Dorsolateral prefrontal cortex (tissue), 120 donors: ENCODE measurements at regions of chr21 and their contacts with region 1.

Region 1: GRCh38 chr21:33199516-33200217 is 30.1 kb upstream of the IFNAR2 start:
- DNase-seq: peak in 7 of 10 donors; percentile 58 to 93 (median 75)
- H3K4me3 ChIP-seq: peak overlapping the region in 10 of 59 donors; percentile 5 to 42 (median 17)
- H3K27ac ChIP-seq: peak overlapping the region in 56 of 59 donors; percentile 2 to 91 (median 75)
- H3K27me3 ChIP-seq: no peaks in the 10 kb centered on the region
- CTCF ChIP-seq: peak; percentile 62 to 96 (median 86)

Region 2: DNA sequence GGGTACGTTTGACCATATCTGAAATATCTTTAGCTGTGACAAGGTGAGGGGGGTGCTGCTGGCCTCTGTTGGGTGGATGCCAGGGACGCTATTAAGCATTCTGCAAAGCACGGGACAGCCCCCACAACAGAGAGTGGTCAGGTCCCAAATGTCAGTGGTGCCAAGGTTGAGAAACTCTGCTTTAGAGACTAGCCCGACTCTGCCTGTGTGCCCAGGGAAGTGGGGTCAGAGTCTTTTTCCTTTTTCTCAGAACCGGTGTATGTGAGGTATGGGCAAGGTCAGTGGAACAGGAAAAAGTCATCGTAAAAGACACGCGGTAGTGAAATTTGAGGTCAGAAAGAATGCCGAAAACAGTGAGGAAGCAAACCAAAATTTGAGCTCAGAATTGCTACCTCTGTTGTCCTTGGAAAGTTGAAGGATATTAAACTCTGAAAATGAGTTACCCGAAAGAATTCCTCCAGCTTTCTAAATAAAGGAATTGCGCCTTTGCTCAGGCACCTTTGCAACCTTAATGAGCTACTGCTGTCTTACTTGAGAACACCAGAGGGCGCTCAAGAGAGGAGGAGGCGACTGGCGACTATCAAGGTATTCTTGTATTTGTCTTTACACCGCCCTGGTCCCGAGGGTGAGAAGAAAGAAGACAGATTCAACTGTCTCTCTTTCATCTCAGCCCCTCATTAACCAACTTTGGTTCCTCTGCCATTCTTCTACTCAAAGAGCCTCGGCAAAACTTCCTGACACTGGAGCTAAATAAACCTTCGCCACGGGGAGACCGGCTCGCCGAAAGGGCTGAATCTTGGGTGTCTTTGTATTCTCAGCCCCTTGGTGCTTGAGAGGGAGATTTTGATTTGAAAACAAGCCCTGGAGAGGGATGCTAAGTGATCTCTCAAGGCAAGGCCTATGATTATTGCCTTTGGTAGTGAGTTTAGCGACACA is 259.3 kb before region 1 on chr21:
- intact Hi-C with region 1: loop called in 1 of 2 experiments (anchors 5 kb)
- DNase-seq: peak in 4 of 10 donors; percentile 19 to 59 (median 34)
- H3K4me3 ChIP-seq: peak overlapping the region in 14 of 59 donors; percentile 3 to 45 (median 29)
- H3K27ac ChIP-seq: peak overlapping the region in 11 of 59 donors; percentile 8 to 64 (median 45)
- H3K27me3 ChIP-seq: peaks cover 0 to 13% (median 0%) of the 10 kb centered on the region in 45 donors
- CTCF ChIP-seq: peak; percentile 48 to 95 (median 82)

Region 3: GRCh38 chr21:33025489-33026442 is 173.9 kb before region 1 on chr21 and contains the start of gene OLIG2:
- intact Hi-C with region 1: loop called (anchors 10 kb)
- DNase-seq: peak; percentile 46 to 96 (median 95)
- H3K4me3 ChIP-seq: peak within 1 kb of the TSS; percentile 35 to 82 (median 61)
- H3K27ac ChIP-seq: peak within 1 kb of the TSS; percentile 40 to 93 (median 86)
- H3K27me3 ChIP-seq: peaks cover 0 to 100% (median 92%) of the 10 kb centered on the region in 45 donors
- CTCF ChIP-seq: peak in 1 of 56 donors; percentile 17
- total RNA-seq, gene OLIG2: 13.9 to 165 (median 45.4) TPM

Region 4: DNA sequence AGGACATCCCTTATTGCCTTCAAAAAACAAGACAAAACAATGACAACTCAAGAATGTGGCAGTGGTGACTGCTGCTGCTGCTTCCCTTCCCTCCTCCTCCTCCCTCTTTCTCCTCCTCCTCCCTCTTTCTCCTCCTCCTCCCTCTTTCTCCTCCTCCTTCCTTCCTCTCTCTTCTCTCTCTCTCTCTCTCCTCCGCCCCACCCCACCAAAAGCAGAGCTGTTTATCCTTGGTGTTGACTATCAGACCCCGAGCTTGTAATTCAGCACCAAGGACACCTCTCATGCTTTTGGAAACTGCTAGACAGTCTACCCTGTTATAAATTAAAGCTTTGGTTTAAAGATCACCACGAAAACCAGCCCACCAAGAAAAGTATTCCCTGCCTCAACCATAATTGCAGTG is 42.4 kb before region 1 on chr21:
- intact Hi-C with region 1: no loop called
- DNase-seq: no peak
- H3K4me3 ChIP-seq: no peak overlapping the region
- H3K27ac ChIP-seq: no peak overlapping the region
- H3K27me3 ChIP-seq: peaks cover 0 to 12% (median 0%) of the 10 kb centered on the region in 45 donors
- CTCF ChIP-seq: no peak

Region 5: DNA sequence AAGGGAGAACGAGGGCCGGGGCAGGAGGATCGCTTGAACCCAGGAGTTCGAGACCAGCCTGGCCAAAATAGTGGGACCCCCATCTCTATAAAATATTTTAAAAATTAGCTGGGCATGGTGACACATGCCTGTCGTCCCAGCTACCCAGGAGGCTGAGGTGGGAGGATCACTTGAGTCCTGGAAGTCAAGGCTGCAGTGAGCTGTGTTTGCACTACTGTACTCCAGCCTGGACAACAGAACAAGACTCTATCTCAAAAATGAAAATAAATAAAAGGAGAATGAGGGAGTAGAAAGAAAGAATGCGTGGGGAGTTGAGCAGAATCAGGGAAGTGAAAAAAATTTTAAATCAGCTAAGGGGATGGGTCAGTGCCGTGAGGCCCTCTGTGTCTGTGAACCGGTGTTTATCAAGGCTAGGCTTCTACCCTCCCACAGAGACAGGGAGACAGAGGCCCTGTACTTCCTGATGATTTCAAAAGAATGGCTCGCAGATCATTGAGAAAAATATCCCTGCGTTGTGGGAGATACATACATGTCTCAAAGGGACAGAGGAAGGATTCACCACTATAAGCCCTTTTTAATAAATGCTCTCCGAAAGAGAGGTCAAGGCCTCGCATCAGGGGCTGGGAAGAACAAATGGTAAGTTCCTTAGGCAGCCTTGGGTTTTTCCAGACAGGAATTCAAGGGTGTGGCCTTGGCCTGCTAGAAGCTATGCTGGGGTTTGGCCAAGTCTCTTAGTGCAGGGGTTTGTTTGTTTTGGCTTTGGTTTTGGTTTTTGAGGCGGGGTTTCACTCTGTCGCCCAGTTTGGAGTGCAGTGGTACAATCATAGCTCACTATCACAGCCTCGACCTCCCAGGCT is 87.2 kb after region 1 on chr21:
- intact Hi-C with region 1: no loop called
- DNase-seq: no peak
- H3K4me3 ChIP-seq: no peak overlapping the region
- H3K27ac ChIP-seq: peak overlapping the region in 16 of 59 donors; percentile 4 to 69 (median 40)
- H3K27me3 ChIP-seq: no peaks in the 10 kb centered on the region
- CTCF ChIP-seq: no peak

Region 6: GRCh38 chr21:33324291-33325221 is 124.9 kb after region 1 on chr21 and contains the start of gene IFNAR1:
- intact Hi-C with region 1: loop called in 1 of 2 experiments (anchors 2 kb)
- DNase-seq: peak; percentile 93 to 97 (median 94)
- H3K4me3 ChIP-seq: peak within 1 kb of the TSS; percentile 67 to 100 (median 94)
- H3K27ac ChIP-seq: peak within 1 kb of the TSS; percentile 87 to 100 (median 98)
- H3K27me3 ChIP-seq: no peaks in the 10 kb centered on the region
- CTCF ChIP-seq: peak in 14 of 56 donors; percentile 0 to 27 (median 14)
- total RNA-seq, gene IFNAR1: 35.7 to 70.9 (median 47.8) TPM

Region 7: GRCh38 chr21:33441489-33442477 is 242.1 kb after region 1 on chr21:
- intact Hi-C with region 1: loop called (anchors 1 to 5 kb)
- DNase-seq: no peak
- H3K4me3 ChIP-seq: no peak overlapping the region
- H3K27ac ChIP-seq: peak overlapping the region in 22 of 59 donors; percentile 2 to 61 (median 28)
- H3K27me3 ChIP-seq: no peaks in the 10 kb centered on the region
- CTCF ChIP-seq: no peak